WTC11 (cell line): ENCODE measurements at regions of chr6 and their contacts with region 1.

Region 1: DNA sequence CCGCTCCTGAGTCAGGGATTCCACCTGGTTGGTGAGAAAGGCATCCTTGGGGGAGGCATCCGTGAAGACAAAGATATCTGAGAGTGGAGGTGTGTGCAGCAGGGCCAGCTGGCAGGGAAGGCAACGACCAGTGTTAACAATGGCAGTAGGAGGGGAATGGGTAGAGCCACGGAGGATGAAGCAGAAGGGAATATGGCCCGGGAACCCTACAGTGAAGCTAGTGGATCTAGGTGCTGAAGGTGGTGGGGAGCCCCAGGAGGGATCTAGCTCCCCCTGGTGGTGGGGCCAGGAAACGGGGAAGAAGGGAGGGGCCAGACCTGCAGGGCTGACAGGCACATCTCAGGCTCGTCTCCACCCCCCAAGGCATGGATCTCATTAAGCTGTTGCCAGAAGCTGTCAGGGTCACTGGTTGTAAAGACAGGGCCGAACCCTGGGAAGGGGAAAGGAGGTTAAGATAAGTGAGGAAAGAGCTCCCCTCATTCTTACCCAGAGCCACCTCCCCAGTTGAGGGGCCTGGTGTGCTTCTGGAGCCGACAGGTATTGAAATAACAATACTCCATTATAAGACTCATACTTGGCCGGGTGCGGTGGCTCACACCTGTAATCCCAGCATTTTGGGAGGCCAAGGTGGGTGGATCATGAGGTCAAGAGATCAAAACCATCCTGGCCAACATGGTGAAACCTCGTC is 7.3 kb downstream of the VWA7 start:
- DNase-seq: peak; percentile 93
- ATAC-seq: peak; percentile 66
- H3K4me3 Mint-ChIP-seq: no peak overlapping the region
- H3K27ac Mint-ChIP-seq: no peak overlapping the region
- H3K4me1 Mint-ChIP-seq: peaks cover 14% of the 10 kb centered on the region
- H3K27me3 Mint-ChIP-seq: no peaks in the 10 kb centered on the region; the same call in 1 of the 2 replicates
- CTCF ChIP-seq: peak; percentile 90

Region 2: GRCh38 chr6:31702819-31703522 is 66.9 kb before region 1 on chr6 and contains the start of gene ABHD16A:
- CTCF ChIA-PET with region 1: interaction called, 10 read pairs
- POLR2A ChIA-PET with region 1: no interaction called
- DNase-seq: peak; percentile 98
- ATAC-seq: peak; percentile 95
- H3K4me3 Mint-ChIP-seq: peak within 1 kb of the TSS; percentile 95
- H3K27ac Mint-ChIP-seq: peak within 1 kb of the TSS; percentile 99
- H3K4me1 Mint-ChIP-seq: peaks cover 12% of the 10 kb centered on the region
- H3K27me3 Mint-ChIP-seq: peaks cover 7% of the 10 kb centered on the region; the same call in 1 of the 2 replicates
- CTCF ChIP-seq: no peak
- total RNA-seq, gene ABHD16A: 28.6 to 30.3 TPM (median 29.8 TPM) in 3 replicates

Region 3: DNA sequence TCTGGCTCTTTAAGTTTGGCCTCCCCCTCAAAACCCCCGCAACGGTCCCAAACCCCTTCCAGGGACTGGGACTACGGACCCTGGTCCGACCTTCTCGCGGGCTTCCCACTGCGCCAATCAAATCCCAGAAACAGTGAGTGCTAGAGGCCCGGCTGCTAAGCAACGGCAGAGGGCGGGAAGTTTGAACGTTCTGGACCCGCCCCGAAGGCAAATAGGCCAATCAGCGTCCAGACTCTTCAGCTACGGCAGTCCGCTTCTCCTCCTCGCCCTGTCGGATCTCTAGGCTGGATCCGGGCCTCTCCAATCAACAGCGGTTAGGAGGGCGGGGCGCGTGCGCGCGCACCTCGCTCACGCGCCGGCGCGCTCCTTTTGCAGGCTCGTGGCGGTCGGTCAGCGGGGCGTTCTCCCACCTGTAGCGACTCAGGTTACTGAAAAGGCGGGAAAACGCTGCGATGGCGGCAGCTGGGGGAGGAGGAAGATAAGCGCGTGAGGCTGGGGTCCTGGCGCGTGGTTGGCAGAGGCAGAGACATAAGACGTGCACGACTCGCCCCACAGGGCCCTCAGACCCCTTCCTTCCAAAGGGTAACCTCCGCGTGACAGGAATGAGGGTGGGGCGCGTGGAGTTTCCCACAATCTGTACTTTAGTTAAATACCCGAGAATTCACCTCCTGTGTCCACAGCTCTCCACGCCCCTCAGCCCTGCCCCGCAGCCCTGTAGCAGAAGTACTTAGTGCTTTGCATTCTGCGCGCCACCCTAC is 30.0 kb before region 1 on chr6 and contains the start of gene MSH5:
- CTCF ChIA-PET with region 1: interaction called, 62 read pairs
- POLR2A ChIA-PET with region 1: interaction called, 6 read pairs
- DNase-seq: peak; percentile 98
- ATAC-seq: peak; percentile 89
- H3K4me3 Mint-ChIP-seq: peak within 1 kb of the TSS; percentile 80
- H3K27ac Mint-ChIP-seq: peak within 1 kb of the TSS; percentile 85
- H3K4me1 Mint-ChIP-seq: peaks cover 42% of the 10 kb centered on the region
- H3K27me3 Mint-ChIP-seq: no peaks in the 10 kb centered on the region; the same call in 1 of the 2 replicates
- CTCF ChIP-seq: no peak
- total RNA-seq, gene MSH5: 43.1 to 62.3 TPM (median 56.1 TPM) in 3 replicates

Region 4: DNA sequence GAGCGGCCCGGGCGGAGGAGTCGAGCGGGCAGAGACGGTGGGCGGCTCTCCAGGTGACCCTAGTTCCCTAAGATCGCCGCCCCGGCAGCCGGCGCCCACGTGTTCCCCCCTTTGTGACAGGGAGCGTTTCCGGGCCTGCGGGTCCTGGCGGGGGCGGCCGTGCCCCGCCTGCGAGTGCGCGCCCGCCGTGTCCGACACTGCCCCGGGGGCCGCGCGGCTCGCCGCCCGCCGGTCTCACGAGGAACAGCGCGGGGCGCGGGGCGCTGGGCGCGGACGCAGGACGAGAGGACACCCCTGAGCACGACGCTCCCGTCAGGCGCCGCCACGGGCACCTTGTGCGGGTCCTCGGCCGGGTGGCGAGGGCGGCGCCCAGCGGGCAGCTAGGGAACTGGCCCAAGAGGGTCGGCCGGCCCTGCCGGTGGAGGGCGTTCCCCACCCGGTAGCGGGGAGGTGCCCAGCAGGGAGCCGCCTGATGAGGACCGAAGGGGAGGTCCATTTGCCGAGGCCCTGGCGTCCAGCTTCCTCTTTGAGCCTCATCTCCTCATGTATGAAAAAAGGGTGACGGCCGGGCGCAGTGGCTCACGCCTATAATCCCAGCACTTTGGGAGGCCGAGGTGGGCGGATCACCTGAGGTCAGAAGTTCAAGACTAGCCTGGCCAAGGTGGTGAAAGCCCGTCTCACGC is 25.9 kb after region 1 on chr6 and contains the start of gene VARS1:
- CTCF ChIA-PET with region 1: interaction called, 23 read pairs
- POLR2A ChIA-PET with region 1: interaction called, 4 read pairs
- DNase-seq: peak; percentile 96
- ATAC-seq: peak; percentile 84
- H3K4me3 Mint-ChIP-seq: peak within 1 kb of the TSS; percentile 99
- H3K27ac Mint-ChIP-seq: peak within 1 kb of the TSS; percentile 97
- H3K4me1 Mint-ChIP-seq: peaks cover 9% of the 10 kb centered on the region
- H3K27me3 Mint-ChIP-seq: no peaks in the 10 kb centered on the region
- CTCF ChIP-seq: peak; percentile 57
- total RNA-seq, gene VARS1: 147 to 177 TPM (median 161 TPM) in 3 replicates

Region 5: GRCh38 chr6:31827286-31828079 is 57.7 kb after region 1 on chr6 and contains the start of gene HSPA1B:
- CTCF ChIA-PET with region 1: interaction called, 22 read pairs
- POLR2A ChIA-PET with region 1: interaction called, 8 read pairs
- DNase-seq: peak; percentile 98
- ATAC-seq: peak; percentile 93
- H3K4me3 Mint-ChIP-seq: peak within 1 kb of the TSS; percentile 75
- H3K27ac Mint-ChIP-seq: peak within 1 kb of the TSS; percentile 99
- H3K4me1 Mint-ChIP-seq: peaks cover 44% of the 10 kb centered on the region
- H3K27me3 Mint-ChIP-seq: no peaks in the 10 kb centered on the region
- CTCF ChIP-seq: no peak
- total RNA-seq, gene HSPA1B: 75.3 to 105 TPM (median 96.4 TPM) in 3 replicates